ENCODE measurements at regions of chr19 and their contacts with region 1.

Region 1: DNA sequence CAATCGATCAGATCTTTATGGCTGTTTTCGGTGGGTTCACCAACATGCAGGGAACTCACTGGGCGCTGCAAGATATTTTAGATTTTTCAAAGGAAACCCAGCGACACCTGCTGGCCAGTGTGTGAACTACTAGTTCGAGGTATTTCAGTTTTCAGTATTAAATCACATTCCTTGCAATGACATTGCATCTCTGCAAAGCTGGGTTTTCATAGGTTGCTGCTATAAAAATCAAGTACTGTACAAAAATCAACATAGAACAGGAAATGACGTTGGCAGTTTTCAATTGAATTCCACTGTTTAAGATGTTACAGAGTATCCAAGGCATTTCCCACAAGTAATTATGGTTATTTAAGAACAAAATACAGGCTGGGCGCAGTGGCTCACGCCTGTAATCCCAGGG is 17.6 kb downstream of the LIG1 start:
- DNase-seq: peak; percentile 29
- H3K4me3 ChIP-seq: no peak overlapping the region
- CTCF ChIP-seq: peak; percentile 64

Region 2: GRCh38 chr19:47973529-47973928 is 179.0 kb before region 1 on chr19:
- CTCF ChIA-PET with region 1: interaction called, 312 read pairs
- POLR2A ChIA-PET with region 1: no interaction called
- DNase-seq: no peak
- H3K4me3 ChIP-seq: no peak overlapping the region
- CTCF ChIP-seq: no peak

Region 3: GRCh38 chr19:48110350-48110966 is 42.1 kb before region 1 on chr19 and contains the start of gene PLA2G4C:
- CTCF ChIA-PET with region 1: interaction called, 196 read pairs
- POLR2A ChIA-PET with region 1: interaction called, 3 read pairs
- DNase-seq: peak; percentile 70
- H3K4me3 ChIP-seq: peak within 1 kb of the TSS; percentile 69
- CTCF ChIP-seq: no peak

Region 4: DNA sequence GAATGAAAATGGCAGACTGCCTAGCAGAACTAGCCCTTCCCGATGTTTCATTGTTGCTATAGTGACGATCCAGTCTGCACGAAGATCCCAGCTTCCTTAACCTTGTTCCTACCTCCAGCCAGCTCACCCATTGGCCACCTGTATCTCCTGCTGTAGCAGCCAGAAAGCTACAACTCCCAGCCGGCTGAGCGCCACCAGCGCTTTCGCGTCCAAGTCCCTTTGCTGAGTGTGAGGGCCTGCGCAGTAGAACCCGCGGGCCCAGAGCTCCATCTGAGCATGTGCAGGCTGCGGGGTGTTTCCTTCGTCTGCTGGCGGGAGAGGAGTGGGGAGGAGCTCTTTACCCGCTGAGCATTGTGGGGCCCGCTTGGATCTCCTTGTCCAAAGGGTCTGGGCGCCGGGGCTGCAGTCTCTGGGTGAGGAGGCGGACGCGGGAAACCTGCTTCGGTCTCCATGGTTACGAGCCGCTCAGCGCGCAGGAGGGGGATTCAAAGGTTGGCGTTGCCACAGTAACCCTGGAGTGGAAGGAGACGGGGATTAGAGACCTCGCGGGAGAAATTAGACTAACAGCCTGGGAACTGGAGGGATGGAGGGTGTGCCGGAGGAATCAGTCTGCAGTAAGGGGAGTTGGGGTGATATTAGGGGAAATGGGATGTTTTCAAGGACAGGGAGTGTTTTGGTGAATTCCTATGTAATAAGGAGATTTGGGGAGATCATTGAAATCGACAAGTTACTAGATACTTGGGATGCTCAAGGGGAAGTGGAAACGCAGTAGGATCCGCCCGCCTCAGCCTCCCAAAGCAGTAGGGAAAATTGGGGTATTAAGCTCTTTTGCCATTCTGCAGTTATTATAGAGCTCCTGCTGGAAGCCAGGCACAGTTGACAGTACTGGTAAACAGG is 51.4 kb after region 1 on chr19:
- CTCF ChIA-PET with region 1: interaction called, 13 read pairs
- POLR2A ChIA-PET with region 1: no interaction called
- DNase-seq: peak; percentile 56
- H3K4me3 ChIP-seq: peak overlapping the region; percentile 91
- CTCF ChIP-seq: no peak

Region 5: GRCh38 chr19:48271531-48272151 is 119.1 kb after region 1 on chr19:
- CTCF ChIA-PET with region 1: no interaction called
- POLR2A ChIA-PET with region 1: no interaction called
- DNase-seq: no peak
- H3K4me3 ChIP-seq: peak overlapping the region; percentile 58
- CTCF ChIP-seq: no peak

Region 6: DNA sequence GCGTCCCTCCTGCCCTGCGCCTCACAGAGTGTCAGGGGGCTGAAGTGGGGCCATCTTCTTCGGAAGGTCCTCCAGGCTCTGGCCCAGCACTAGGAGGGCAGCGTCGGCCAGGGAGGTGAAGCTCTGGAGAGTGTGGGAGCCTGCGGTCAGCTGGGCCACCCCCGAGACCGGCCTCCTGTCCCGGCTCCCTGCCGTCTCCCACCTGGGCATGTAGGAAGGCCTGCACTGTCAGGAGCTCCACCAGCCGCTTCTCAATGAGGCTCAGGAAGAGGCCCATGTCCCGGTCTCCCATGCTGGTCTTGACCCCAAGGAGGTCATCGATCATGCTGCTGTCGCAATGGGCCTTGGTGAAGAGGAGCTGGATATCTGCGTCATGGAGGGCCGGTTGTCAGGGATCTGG is 145.4 kb after region 1 on chr19:
- CTCF ChIA-PET with region 1: no interaction called
- POLR2A ChIA-PET with region 1: no interaction called
- DNase-seq: no peak
- H3K4me3 ChIP-seq: no peak overlapping the region
- CTCF ChIP-seq: no peak